ENCODE measurements at regions of chr1 and their contacts with region 1.

Region 1: GRCh38 chr1:16133007-16133961 is 22.6 kb downstream of the EPHA2 start:
- DNase-seq: no peak
- ATAC-seq: peak in 1 of 8 donors; percentile 3
- H3K4me3 ChIP-seq: no peak overlapping the region
- H3K27ac ChIP-seq: peak overlapping the region in 1 of 10 donors; percentile 48
- H3K4me1 ChIP-seq: peaks cover 0 to 30% (median 9%) of the 10 kb centered on the region in 9 donors
- H3K27me3 ChIP-seq: no peaks in the 10 kb centered on the region
- CTCF ChIP-seq: no peak

Region 2: GRCh38 chr1:16048573-16049189 is 84.6 kb before region 1 on chr1:
- intact Hi-C with region 1: no loop called
- DNase-seq: peak; percentile 49 to 57
- ATAC-seq: peak; percentile 49 to 78 (median 62)
- H3K4me3 ChIP-seq: peak overlapping the region; percentile 11 to 56 (median 42)
- H3K27ac ChIP-seq: peak overlapping the region in 2 of 10 donors; percentile 3 to 15
- H3K4me1 ChIP-seq: peaks cover 0 to 8% (median 7%) of the 10 kb centered on the region in 9 donors
- H3K27me3 ChIP-seq: peaks cover 0 to 8% (median 0%) of the 10 kb centered on the region in 7 donors
- CTCF ChIP-seq: peak in 2 of 9 donors; percentile 8 to 20

Region 3: GRCh38 chr1:16088996-16089395 is 44.3 kb before region 1 on chr1:
- intact Hi-C with region 1: loop called in 3 of 10 experiments (anchors 5 to 10 kb)
- DNase-seq: no peak
- ATAC-seq: peak in 3 of 8 donors; percentile 34 to 53 (median 34)
- H3K4me3 ChIP-seq: no peak overlapping the region
- H3K27ac ChIP-seq: peak overlapping the region in 4 of 10 donors; percentile 19 to 62 (median 46)
- H3K4me1 ChIP-seq: peaks cover 5 to 40% (median 13%) of the 10 kb centered on the region in 9 donors
- H3K27me3 ChIP-seq: no peaks in the 10 kb centered on the region
- CTCF ChIP-seq: no peak

Region 4: DNA sequence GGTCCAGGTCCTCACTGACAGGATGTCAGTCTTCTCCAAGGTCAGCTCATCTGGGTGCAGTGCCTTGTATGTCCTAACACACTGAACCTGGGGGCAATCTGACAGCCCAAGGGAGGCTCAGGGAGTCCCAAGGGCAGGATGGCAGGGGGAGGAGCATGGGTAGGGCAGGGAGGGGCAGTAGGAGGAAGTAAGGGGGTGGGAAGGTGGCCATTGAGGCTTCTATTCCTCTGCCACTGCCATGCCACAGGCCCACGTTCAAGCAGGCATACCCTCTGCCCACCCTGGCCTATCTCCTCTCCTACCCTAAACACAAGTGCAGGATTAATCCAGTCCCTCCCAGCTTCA is 65.8 kb after region 1 on chr1:
- intact Hi-C with region 1: no loop called
- DNase-seq: no peak
- ATAC-seq: no peak
- H3K4me3 ChIP-seq: no peak overlapping the region
- H3K27ac ChIP-seq: no peak overlapping the region
- H3K4me1 ChIP-seq: no peaks in the 10 kb centered on the region
- H3K27me3 ChIP-seq: no peaks in the 10 kb centered on the region
- CTCF ChIP-seq: no peak

Measured in heart right ventricle (tissue), 16 donors.